ENCODE measurements at regions of chr21 and their contacts with region 1.

Region 1: DNA sequence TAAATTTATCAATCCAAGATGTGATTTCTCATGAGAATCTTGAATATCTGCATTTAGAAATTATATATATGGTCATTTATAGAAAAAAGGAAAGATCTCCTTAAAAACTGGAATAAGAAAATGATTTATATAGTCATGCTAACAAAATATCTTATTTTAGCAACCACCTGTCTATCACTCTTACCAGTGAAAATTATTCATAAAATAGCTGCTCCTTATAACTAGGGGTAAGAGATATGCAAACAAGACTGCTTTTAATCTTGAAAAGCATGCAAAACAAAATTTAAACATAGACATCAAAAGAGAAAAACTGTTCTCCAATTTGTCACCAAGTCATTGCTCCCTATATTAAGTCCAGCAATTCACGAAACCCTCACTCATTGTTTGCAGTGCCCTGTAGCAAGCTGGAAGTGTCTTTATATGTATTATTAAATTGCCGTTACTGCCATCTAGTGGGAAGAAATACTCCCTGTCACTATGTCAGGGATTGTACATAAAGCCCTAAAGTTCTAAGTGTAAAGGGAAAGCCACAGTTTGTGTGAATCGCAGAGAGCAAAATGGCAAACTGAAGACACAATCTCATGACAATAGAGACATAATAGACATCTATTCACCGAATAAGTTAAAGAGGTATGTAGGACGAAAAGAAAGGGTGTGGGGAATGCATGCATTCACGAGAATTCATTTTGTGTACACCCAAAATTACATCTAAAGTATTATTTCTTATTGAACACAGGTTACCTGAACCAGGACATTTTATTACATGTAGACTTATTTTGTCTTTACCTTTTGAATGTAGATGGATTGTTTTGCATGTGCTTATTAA is 600.5 kb downstream of the USP25 start:
- DNase-seq: peak in 1 of 2 donors; percentile 34
- H3K4me3 ChIP-seq: no peak overlapping the region
- H3K27ac ChIP-seq: no peak overlapping the region
- H3K4me1 ChIP-seq: peaks cover 0 to 4% (median 0%) of the 10 kb centered on the region in 4 donors
- H3K27me3 ChIP-seq: no peaks in the 10 kb centered on the region
- CTCF ChIP-seq: peak; percentile 65 to 67

Region 2: GRCh38 chr21:16082038-16082816 is 248.1 kb before region 1 on chr21:
- intact Hi-C with region 1: loop called (anchors 5 kb)
- DNase-seq: no peak
- H3K4me3 ChIP-seq: no peak overlapping the region
- H3K27ac ChIP-seq: no peak overlapping the region
- H3K4me1 ChIP-seq: no peaks in the 10 kb centered on the region
- H3K27me3 ChIP-seq: no peaks in the 10 kb centered on the region
- CTCF ChIP-seq: peak; percentile 38 to 47

Region 3: GRCh38 chr21:16194095-16194787 is 136.1 kb before region 1 on chr21:
- intact Hi-C with region 1: loop called (anchors 1 kb)
- DNase-seq: peak; percentile 77 to 82
- H3K4me3 ChIP-seq: peak overlapping the region; percentile 48 to 55
- H3K27ac ChIP-seq: peak overlapping the region; percentile 67 to 83
- H3K4me1 ChIP-seq: peaks cover 0 to 5% (median 1%) of the 10 kb centered on the region in 4 donors
- H3K27me3 ChIP-seq: no peaks in the 10 kb centered on the region
- CTCF ChIP-seq: peak in 1 of 2 experiments; percentile 33

Measured in tibial artery (tissue), 4 donors.